ENCODE measurements at regions of chr5 and their contacts with region 1.

Region 1: GRCh38 chr5:81194633-81195333 is 38.3 kb upstream of the CKMT2 start:
- DNase-seq: peak; percentile 84
- H3K4me3 ChIP-seq: no peak overlapping the region
- H3K27ac ChIP-seq: no peak overlapping the region
- H3K4me1 ChIP-seq: 0 out of 2 replicates have a peak, but pooled peaks cover 4% of the 10 kb centered on the region
- H3K27me3 ChIP-seq: peaks cover 7% of the 10 kb centered on the region

Region 2: GRCh38 chr5:80686757-80687156 is 508.0 kb before region 1 on chr5:
- in situ Hi-C with region 1: loop called (anchors 25 kb)
- DNase-seq: peak; percentile 46
- H3K4me3 ChIP-seq: no peak overlapping the region
- H3K27ac ChIP-seq: no peak overlapping the region
- H3K4me1 ChIP-seq: no peaks in the 10 kb centered on the region
- H3K27me3 ChIP-seq: no peaks in the 10 kb centered on the region

Region 3: DNA sequence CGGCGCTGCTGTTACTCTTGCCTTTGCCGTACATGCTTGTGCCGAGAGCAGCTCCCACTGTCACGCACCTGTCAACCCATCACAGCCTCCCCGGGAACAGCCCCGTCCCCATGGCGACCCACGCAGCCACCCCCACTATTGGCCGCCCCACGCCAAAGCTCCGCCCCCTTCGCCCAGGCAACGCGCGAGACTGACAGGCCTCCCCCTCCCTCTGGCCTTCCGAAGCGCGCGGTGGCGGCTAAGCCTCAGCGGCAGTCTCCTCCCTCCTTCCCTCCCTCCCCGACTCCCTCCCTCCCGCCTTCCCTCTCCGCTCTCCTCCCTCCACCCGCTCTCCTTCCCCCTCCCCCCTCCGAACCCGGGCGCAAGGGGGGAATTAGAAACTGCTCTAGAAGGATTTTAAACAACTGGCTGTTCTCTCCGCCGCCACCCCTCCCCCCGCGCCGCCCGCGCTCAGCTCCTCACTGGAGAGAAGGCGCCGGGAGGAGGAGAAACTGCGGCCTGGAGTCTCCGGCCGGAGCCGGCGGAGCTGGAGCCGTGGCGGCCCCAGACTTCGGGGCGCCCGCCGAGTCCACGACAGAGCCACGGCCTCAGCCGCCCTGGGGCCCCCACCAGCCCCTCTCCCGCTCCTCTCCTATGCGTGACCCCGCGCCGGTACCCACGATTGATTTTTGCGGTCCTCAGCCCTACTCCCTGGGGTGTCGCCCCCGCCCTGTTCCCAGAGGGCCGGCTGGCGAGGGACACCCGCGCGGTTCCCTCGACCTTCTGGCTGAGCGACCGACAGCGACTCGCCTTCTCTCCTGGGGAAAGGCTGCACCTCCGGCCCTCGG is 556.4 kb after region 1 on chr5 and contains the start of gene SSBP2:
- in situ Hi-C with region 1: no loop called
- DNase-seq: peak; percentile 99
- H3K4me3 ChIP-seq: peak within 1 kb of the TSS; percentile 84
- H3K27ac ChIP-seq: peak within 1 kb of the TSS; percentile 98
- H3K4me1 ChIP-seq: peaks cover 23% of the 10 kb centered on the region
- H3K27me3 ChIP-seq: no peaks in the 10 kb centered on the region
- total RNA-seq, gene SSBP2: 22.0 and 25.5 TPM in 2 replicates